Dendritic cell treated with granulocyte-macrophage colony-stimulating factor and Interleukin-4, amounts not matched to agents 40 ng/mL and 50 ng/mL, for 4 days (primary cell): ENCODE measurements at regions of chr2 and their contacts with region 1.

Region 1: DNA sequence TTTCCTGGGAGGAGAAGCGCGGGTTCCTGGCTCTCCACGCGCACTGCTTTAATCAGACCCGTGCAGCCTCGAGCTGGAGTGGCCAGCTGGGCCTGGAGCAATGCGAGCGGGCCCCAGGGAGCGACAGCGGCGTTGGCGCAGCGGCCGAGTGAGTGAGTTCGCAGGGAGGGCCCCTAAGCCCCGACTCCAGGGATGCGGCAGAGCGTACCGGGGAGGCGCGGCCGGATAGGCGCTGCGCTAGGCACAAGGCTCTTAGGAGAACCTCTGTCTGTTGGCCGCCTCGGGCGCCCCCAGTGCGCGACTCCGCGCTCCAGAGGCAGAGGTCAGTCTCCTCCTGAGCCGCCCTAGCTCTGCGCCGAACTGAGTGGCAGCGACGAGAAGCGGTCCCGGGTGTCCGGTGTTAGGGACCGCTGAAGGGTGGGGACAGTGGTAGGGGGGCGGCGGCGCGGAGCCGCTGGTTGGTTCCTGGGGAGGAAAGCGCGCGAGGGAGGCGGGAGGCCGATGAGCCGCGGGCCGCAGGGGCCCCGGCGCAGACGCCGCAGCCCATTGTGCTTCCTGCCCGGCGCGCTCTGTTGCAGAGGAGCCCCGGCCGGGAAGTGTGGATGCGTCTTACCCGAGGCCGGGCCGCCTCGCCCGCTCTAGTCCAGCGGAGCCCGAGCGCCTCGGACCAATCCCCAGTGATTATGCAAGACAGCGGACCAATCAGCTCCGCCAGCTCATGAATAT is 410 bp upstream of the DLX1 start:
- H3K4me3 Mint-ChIP-seq: peak overlapping the region; percentile 77
- H3K27ac Mint-ChIP-seq: peak overlapping the region; percentile 68
- H3K4me1 Mint-ChIP-seq: peaks cover 77% of the 10 kb centered on the region
- H3K27me3 Mint-ChIP-seq: peaks cover 97% of the 10 kb centered on the region

Region 2: DNA sequence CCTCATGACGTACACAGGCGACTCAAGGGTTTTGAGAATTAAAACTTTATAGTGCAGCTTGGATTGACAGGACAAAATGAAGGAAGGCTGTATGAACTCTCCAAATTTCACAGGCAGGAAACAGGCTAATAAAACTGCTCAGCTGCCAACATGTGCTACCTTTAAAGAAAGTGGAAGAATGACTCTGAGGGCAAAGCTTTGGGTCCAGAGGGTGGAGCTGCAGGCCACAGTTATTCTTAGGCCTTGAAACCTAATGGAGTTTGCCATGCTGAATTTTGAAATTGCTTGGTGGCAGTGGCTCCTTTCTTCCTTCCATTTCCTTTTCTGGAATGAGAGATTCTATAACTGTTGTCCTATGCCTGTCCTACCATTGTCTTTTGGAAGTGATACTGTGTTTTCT is 127.8 kb before region 1 on chr2:
- intact Hi-C with region 1: loop called (anchors 5 kb)
- H3K4me3 Mint-ChIP-seq: no peak overlapping the region
- H3K27ac Mint-ChIP-seq: peak overlapping the region; percentile 89
- H3K4me1 Mint-ChIP-seq: peaks cover 54% of the 10 kb centered on the region
- H3K27me3 Mint-ChIP-seq: no peaks in the 10 kb centered on the region

Region 3: DNA sequence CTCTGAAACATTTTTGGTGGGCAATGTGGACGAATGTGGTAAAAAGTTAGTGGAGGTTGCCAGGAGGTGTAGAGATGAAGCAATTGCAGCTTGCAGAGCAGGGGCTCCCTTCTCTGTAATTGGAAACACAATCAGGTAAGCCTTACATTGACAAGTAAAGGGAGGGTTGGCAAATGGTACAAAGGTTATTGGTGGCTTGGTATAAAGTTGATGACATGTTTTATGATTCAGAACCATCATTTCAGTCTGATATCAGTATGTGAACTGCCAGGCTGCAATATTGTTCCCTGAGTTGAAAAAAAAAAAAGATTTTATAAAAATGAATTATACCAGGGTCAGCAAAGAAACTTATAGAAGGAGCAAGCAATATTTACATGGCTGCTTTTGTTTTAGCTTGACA is 14.0 kb before region 1 on chr2:
- intact Hi-C with region 1: loop called (anchors 1 kb)
- H3K4me3 Mint-ChIP-seq: no peak overlapping the region
- H3K27ac Mint-ChIP-seq: no peak overlapping the region
- H3K4me1 Mint-ChIP-seq: no peaks in the 10 kb centered on the region
- H3K27me3 Mint-ChIP-seq: peaks cover 2% of the 10 kb centered on the region

Region 4: DNA sequence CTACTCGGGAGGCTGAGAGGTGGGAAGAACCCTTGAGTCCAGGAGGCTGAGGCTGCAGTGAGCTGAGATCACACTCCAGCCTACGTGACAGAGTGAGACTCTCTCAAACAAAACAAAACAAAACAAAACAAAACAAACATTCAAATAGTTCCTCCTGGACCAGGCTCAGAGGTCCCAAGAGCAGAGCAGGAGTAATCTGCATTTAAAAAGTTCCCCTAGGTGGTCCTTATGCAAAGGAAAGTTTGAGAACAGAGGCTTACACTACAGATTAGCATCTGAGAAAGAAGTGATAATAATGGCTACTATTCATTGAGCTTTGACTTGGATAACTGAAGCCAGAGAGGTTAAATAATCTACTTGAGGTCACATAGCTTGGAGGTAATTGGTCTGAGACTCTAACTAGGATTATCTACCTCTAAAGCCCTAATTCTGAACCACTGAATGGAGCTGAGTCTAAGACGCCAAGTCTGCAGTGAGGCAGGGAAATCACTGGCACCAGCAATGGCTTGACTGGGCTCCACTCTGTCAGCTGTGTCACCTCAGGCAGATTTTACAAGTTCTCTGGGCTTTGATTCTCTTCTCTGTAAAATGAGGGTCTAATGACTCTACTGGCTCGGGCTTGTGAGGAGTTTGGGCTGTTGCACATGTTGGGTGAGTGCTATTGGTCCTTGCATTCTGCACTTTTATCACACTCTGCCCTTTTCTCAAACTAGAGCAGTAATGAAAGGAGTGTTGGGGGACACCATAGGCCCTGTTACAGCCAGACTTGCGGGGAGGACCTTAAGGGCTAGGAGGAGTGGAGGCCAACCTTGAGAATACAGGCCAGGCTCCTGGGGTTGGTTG is 47.0 kb after region 1 on chr2:
- intact Hi-C with region 1: no loop called
- H3K4me3 Mint-ChIP-seq: no peak overlapping the region
- H3K27ac Mint-ChIP-seq: no peak overlapping the region
- H3K4me1 Mint-ChIP-seq: no peaks in the 10 kb centered on the region
- H3K27me3 Mint-ChIP-seq: no peaks in the 10 kb centered on the region